CD4-positive, alpha-beta memory T cell (primary cell): ENCODE measurements at regions of chr12 and their contacts with region 1.

Region 1: DNA sequence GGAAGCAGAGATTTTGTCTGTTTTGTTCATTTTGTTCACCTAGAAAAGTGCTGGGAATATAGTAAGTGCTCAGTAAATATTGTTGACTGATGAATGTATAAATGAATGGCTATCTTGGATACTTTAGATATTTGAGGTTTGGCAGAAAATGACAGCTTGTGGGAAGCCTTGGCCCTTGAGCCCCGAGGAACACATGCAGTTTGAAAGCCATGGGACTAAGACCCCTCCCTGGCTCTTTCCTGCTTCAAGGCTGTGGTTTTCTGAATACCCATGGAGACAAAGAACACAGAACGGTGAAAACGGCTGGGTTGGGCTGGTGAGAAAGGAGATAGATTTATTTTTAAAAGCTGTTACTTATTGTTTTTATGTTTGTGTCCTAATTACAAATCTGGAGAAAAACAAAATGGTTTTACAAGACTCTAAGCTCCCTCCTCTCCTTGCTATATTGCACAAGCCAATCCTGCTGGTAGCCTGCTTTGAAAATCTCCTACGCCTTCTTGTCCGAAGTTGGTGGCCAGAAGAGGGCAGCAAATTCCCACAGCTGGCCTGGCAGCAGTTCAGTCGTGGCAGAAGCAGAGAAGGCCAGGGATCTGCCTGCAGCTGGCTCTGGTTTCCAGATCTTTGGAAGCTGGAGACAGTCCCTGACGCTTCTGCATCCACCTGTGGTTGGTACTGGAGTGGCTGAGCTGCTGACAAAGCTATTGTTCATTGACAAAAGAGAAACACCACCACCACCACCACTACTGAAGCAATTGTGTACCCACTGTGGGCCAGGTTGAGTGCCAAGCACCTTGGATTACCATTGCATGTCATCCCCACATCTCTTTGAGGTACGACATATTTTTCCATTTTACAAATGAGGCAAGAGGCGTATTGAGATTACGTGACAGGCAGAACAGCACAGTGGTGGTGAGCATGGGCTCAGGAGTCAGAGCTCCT is 5.2 kb upstream of the KRT85 start:
- DNase-seq: peak in 3 of 5 donors; percentile 35 to 39 (median 37)
- H3K4me3 ChIP-seq: no peak overlapping the region
- H3K4me3 Mint-ChIP-seq: no peak overlapping the region
- H3K27ac ChIP-seq: no peak overlapping the region
- H3K27ac Mint-ChIP-seq: no peak overlapping the region
- H3K4me1 ChIP-seq: no peaks in the 10 kb centered on the region
- H3K4me1 Mint-ChIP-seq: no peaks in the 10 kb centered on the region
- H3K27me3 ChIP-seq: no peaks in the 10 kb centered on the region
- H3K27me3 Mint-ChIP-seq: peaks cover 7 to 23% of the 10 kb centered on the region in 2 donors

Region 2: GRCh38 chr12:52416383-52416750 is 43.9 kb after region 1 on chr12:
- CTCF ChIA-PET with region 1: no interaction called
- POLR2A ChIA-PET with region 1: no interaction called
- intact Hi-C with region 1: no loop called
- DNase-seq: no peak
- H3K4me3 ChIP-seq: no peak overlapping the region
- H3K4me3 Mint-ChIP-seq: no peak overlapping the region
- H3K27ac ChIP-seq: no peak overlapping the region
- H3K27ac Mint-ChIP-seq: no peak overlapping the region
- H3K4me1 ChIP-seq: no peaks in the 10 kb centered on the region
- H3K4me1 Mint-ChIP-seq: peaks cover 0 to 1% (median 0%) of the 10 kb centered on the region in 4 donors
- H3K27me3 ChIP-seq: no peaks in the 10 kb centered on the region
- H3K27me3 Mint-ChIP-seq: peaks cover 2 to 33% of the 10 kb centered on the region in 2 donors

Region 3: GRCh38 chr12:52879394-52880351 is 507.2 kb after region 1 on chr12:
- CTCF ChIA-PET with region 1: interaction called, 51 read pairs
- POLR2A ChIA-PET with region 1: interaction called, 3 read pairs
- intact Hi-C with region 1: no loop called
- DNase-seq: peak; percentile 65 to 70 (median 67)
- H3K4me3 ChIP-seq: no peak overlapping the region
- H3K4me3 Mint-ChIP-seq: peak overlapping the region; percentile 48 to 85 (median 73)
- H3K27ac ChIP-seq: no peak overlapping the region
- H3K27ac Mint-ChIP-seq: peak overlapping the region in 1 of 7 donors; percentile 52
- H3K4me1 ChIP-seq: peaks cover 8% of the 10 kb centered on the region
- H3K4me1 Mint-ChIP-seq: peaks cover 3 to 14% (median 10%) of the 10 kb centered on the region in 4 donors
- H3K27me3 ChIP-seq: no peaks in the 10 kb centered on the region
- H3K27me3 Mint-ChIP-seq: peaks cover 2 to 9% of the 10 kb centered on the region in 2 donors